ENCODE measurements at regions of chr14 and their contacts with region 1.

Region 1: GRCh38 chr14:74905375-74906142 is 17.5 kb downstream of the RPS6KL1 start:
- DNase-seq: peak in 9 of 10 donors; percentile 53 to 95 (median 78)

Region 2: DNA sequence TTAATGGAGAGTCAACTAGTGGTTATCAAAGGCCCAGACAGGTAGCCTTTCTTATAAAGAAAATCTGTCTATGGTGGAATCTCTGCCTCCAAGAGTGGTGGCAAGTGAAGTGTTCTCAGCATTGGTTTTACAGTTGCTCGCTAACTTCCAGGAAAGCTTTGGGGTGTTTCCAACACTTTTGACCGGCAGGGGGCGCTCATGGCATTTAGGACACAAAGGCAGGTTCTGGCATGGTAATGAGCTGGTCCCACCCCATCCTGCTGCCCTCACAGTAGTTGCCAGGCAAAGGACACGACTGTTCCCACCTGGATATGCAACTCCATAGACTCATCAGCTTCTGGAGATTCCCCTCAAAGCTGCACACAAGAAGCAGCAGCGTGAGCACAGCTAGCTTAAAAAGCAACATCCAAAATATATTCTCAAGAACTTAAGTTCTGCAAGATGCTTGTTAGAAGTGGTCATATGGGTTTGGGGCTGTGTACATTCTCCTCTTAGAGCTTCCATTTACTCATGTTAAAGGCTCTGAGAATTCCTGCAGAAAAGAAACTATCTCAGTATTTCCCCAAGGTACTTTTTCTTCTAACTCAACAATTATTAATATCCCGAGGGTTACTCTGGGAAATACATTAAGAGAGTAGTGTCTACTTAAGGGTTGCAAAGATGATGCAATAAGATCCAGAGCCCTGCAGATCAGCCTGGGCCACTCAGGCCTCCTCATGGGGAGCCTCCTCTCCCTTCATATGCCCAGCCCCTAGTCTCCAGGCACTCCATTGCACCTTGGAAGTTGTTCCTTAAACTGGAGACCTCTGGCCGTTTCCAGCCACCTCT is 44.4 kb before region 1 on chr14:
- intact Hi-C with region 1: loop called (anchors 1 kb)
- DNase-seq: peak; percentile 72 to 98 (median 91)